BJ (cell line): ENCODE measurements at regions of chr10 and their contacts with region 1.

Region 1: DNA sequence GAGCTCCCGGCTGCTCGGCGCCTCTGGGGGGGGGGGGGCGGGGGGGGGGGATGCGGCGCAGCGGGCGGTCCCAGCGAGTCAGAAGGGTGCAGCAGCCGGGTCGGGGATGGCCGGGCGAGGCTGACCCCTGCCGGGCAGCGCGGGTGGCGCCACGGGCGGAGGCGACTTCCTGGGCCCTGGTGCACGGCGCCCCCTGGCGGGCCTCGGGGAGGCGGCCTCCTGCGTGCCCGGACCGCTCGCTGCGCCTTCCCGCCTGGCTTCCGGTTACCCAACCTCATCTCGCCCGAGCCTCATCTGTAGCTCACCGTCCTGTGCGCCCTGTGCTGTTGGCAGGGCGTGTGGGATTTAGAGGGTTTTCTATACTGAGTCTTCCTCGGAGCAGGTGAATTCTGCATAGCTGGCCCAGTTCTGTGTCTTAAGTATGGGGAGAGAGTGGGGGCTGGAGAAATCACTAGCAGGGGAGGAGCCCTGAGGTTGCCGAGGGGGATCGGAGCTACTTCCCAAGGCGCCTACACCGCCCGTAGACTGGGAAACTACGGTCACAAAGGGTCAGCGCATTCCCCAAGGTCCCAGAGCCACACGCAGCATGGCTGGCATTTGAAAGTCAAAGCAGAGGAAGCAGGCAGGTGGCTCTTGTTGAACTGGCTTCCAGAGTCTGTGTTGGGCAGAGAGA is 28.3 kb upstream of the WDFY4 start:
- DNase-seq: peak; percentile 36
- H3K4me3 ChIP-seq: peak overlapping the region; percentile 62
- H3K27me3 ChIP-seq: peaks cover 4% of the 10 kb centered on the region
- CTCF ChIP-seq: peak; percentile 59

Region 2: GRCh38 chr10:48363617-48364355 is 292.6 kb before region 1 on chr10:
- CTCF ChIA-PET with region 1: interaction called, 139 read pairs
- POLR2A ChIA-PET with region 1: no interaction called
- DNase-seq: peak; percentile 37
- H3K4me3 ChIP-seq: no peak overlapping the region
- H3K27me3 ChIP-seq: no peaks in the 10 kb centered on the region
- CTCF ChIP-seq: peak; percentile 64

Region 3: GRCh38 chr10:48523820-48524758 is 132.3 kb before region 1 on chr10:
- CTCF ChIA-PET with region 1: interaction called, 87 read pairs
- POLR2A ChIA-PET with region 1: no interaction called
- DNase-seq: no peak
- H3K4me3 ChIP-seq: peak overlapping the region; percentile 56
- H3K27me3 ChIP-seq: no peaks in the 10 kb centered on the region
- CTCF ChIP-seq: peak; percentile 53

Region 4: GRCh38 chr10:48579251-48579960 is 77.0 kb before region 1 on chr10:
- CTCF ChIA-PET with region 1: interaction called, 84 read pairs
- POLR2A ChIA-PET with region 1: interaction called, 3 read pairs
- DNase-seq: no peak
- H3K4me3 ChIP-seq: no peak overlapping the region
- H3K27me3 ChIP-seq: no peaks in the 10 kb centered on the region
- CTCF ChIP-seq: no peak

Region 5: GRCh38 chr10:48608279-48608681 is 48.1 kb before region 1 on chr10:
- CTCF ChIA-PET with region 1: interaction called, 155 read pairs
- POLR2A ChIA-PET with region 1: no interaction called
- DNase-seq: no peak
- H3K4me3 ChIP-seq: no peak overlapping the region
- H3K27me3 ChIP-seq: no peaks in the 10 kb centered on the region
- CTCF ChIP-seq: peak; percentile 80

Region 6: DNA sequence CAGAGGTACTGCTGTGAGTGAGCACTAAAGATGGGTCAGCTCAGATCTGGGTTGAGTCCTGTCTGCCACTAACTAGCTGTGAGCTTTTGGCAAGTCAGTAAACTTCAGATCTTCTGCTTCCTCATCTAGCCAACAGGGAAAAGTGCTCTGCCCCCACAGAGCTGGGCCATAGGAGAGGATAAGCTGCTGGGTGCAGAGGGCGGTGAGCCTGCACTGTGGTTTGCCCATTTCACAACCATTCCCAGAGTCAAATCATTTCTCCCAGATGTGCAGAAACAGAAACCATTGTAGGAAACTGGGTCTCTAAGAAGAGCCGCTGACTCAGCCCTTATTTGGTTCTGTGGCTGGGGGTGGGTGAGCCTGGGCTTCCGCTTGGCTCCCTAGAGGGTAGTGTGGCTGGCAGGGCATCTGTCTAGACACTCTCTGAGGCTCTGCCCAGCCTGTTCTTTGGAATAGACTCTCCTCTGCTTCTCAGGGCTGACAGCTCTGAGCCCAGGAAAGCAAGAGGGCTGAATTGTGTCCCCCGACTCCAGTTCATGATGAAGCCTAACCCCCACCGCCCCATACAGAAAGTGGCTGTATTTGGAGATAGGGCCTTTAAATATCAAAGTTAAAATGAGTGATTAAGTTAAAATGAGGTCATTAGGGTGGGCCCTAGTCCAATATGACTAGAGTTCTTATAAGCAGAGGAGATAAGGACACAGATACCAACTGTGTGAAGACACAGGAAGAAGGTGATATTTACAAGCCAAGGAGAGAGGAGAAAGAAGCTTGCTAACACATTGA is 22.0 kb before region 1 on chr10:
- CTCF ChIA-PET with region 1: interaction called, 97 read pairs
- POLR2A ChIA-PET with region 1: interaction called, 6 read pairs
- DNase-seq: peak; percentile 31
- H3K4me3 ChIP-seq: no peak overlapping the region
- H3K27me3 ChIP-seq: no peaks in the 10 kb centered on the region
- CTCF ChIP-seq: no peak